CD4-positive, alpha-beta memory T cell (primary cell): ENCODE measurements at regions of chr7 and their contacts with region 1.

Region 1: GRCh38 chr7:27784393-27785053 is 44.6 kb downstream of the TAX1BP1 start:
- DNase-seq: peak; percentile 35 to 52 (median 45)
- H3K4me3 ChIP-seq: no peak overlapping the region
- H3K4me3 Mint-ChIP-seq: no peak overlapping the region
- H3K27ac ChIP-seq: no peak overlapping the region
- H3K27ac Mint-ChIP-seq: peak overlapping the region in 3 of 7 donors; percentile 47 to 77 (median 57)
- H3K4me1 ChIP-seq: no peaks in the 10 kb centered on the region
- H3K4me1 Mint-ChIP-seq: peaks cover 16 to 19% (median 16%) of the 10 kb centered on the region in 4 donors
- H3K27me3 ChIP-seq: no peaks in the 10 kb centered on the region
- H3K27me3 Mint-ChIP-seq: no peaks in the 10 kb centered on the region

Region 2: GRCh38 chr7:27739909-27740448 is 44.5 kb before region 1 on chr7 and contains the start of gene TAX1BP1:
- CTCF ChIA-PET with region 1: no interaction called
- POLR2A ChIA-PET with region 1: interaction called, 3 read pairs
- intact Hi-C with region 1: loop called (anchors 5 kb)
- DNase-seq: peak; percentile 93 to 96 (median 96)
- H3K4me3 ChIP-seq: peak within 1 kb of the TSS; percentile 100
- H3K4me3 Mint-ChIP-seq: peak within 1 kb of the TSS; percentile 94 to 99 (median 96)
- H3K27ac ChIP-seq: peak within 1 kb of the TSS; percentile 97
- H3K27ac Mint-ChIP-seq: peak within 1 kb of the TSS; percentile 96 to 100 (median 99)
- H3K4me1 ChIP-seq: peaks cover 33% of the 10 kb centered on the region
- H3K4me1 Mint-ChIP-seq: peaks cover 23 to 53% (median 37%) of the 10 kb centered on the region in 4 donors
- H3K27me3 ChIP-seq: no peaks in the 10 kb centered on the region
- H3K27me3 Mint-ChIP-seq: peaks cover 0 to 3% of the 10 kb centered on the region in 2 donors
- total RNA-seq, gene TAX1BP1: 109 to 111 TPM